ENCODE measurements at regions of chr2 and their contacts with region 1.

Region 1: GRCh38 chr2:113390124-113390849 is 47.2 kb upstream of the ZNG1B start:
- DNase-seq: peak; percentile 59
- H3K4me3 Mint-ChIP-seq: peak overlapping the region; percentile 7
- H3K27ac Mint-ChIP-seq: peak overlapping the region; percentile 38
- H3K4me1 Mint-ChIP-seq: peaks cover 11% of the 10 kb centered on the region
- H3K27me3 Mint-ChIP-seq: peaks cover 9% of the 10 kb centered on the region

Region 2: DNA sequence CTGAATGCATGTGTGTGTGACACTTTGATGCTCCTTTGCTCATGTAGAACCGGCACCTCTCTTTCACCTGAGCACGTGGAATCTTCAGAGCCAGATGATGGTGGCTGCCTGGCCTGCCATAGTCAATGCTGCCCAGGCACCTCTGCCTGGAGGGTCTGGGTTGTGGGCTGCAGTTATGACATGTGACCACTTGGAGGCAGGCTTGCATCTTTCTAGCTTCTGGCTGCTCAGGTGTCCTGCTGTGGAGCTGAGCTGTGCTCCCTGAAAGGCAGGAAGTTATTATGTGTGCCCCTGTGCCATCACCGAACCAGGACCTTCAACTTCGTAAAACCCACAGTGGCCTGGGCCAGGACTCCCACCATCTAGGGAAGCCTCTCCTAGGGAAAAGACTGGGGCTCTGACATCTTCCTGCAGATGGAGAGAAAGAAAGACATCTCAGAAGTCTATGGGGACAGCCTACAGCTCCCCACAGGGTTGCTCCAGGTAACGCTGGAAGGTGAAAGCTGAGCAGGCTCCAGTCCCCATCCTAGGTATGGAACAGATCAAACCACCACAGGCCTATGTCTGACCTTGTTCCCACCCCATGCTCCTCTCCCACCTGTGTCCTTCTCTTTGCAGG is 186.3 kb before region 1 on chr2:
- CTCF ChIA-PET with region 1: interaction called, 18 read pairs
- POLR2A ChIA-PET with region 1: no interaction called
- intact Hi-C with region 1: loop called (anchors 5 kb)
- DNase-seq: peak; percentile 85
- H3K4me3 Mint-ChIP-seq: no peak overlapping the region
- H3K27ac Mint-ChIP-seq: peak overlapping the region; percentile 79
- H3K4me1 Mint-ChIP-seq: peaks cover 10% of the 10 kb centered on the region
- H3K27me3 Mint-ChIP-seq: no peaks in the 10 kb centered on the region

Region 3: GRCh38 chr2:113225263-113226259 is 164.7 kb before region 1 on chr2:
- CTCF ChIA-PET with region 1: no interaction called
- POLR2A ChIA-PET with region 1: no interaction called
- intact Hi-C with region 1: no loop called
- DNase-seq: no peak
- H3K4me3 Mint-ChIP-seq: no peak overlapping the region
- H3K27ac Mint-ChIP-seq: no peak overlapping the region
- H3K4me1 Mint-ChIP-seq: peaks cover 4% of the 10 kb centered on the region
- H3K27me3 Mint-ChIP-seq: peaks cover 2% of the 10 kb centered on the region

Region 4: DNA sequence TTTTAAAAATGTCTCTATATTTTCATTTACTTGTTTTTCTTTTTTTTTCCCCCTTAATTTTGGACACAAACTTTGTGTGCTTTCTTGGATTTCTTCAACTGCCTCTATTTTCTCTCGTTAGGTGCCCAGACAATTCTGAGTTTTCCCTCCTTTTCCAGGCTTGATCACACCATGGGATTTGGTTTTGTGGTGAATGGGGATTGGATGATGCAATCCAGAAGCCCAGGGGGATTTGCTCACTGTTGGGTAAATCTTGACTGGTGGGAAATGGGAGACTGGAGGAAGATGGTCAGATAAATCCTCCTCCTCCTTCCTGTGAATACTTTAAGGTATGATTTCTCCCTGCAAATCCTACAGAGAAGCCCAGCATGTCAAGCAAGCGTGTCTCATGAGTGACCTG is 92.1 kb before region 1 on chr2:
- CTCF ChIA-PET with region 1: interaction called, 10 read pairs
- POLR2A ChIA-PET with region 1: no interaction called
- intact Hi-C with region 1: no loop called
- DNase-seq: no peak
- H3K4me3 Mint-ChIP-seq: no peak overlapping the region
- H3K27ac Mint-ChIP-seq: no peak overlapping the region
- H3K4me1 Mint-ChIP-seq: no peaks in the 10 kb centered on the region
- H3K27me3 Mint-ChIP-seq: no peaks in the 10 kb centered on the region

Region 5: GRCh38 chr2:113376913-113377445 is 13.3 kb before region 1 on chr2:
- CTCF ChIA-PET with region 1: interaction called, 12 read pairs
- POLR2A ChIA-PET with region 1: no interaction called
- intact Hi-C with region 1: no loop called
- DNase-seq: no peak
- H3K4me3 Mint-ChIP-seq: no peak overlapping the region
- H3K27ac Mint-ChIP-seq: peak overlapping the region; percentile 35
- H3K4me1 Mint-ChIP-seq: peaks cover 17% of the 10 kb centered on the region
- H3K27me3 Mint-ChIP-seq: peaks cover 11% of the 10 kb centered on the region

Region 6: GRCh38 chr2:113407446-113408099 is 17.3 kb after region 1 on chr2:
- CTCF ChIA-PET with region 1: no interaction called
- POLR2A ChIA-PET with region 1: no interaction called
- intact Hi-C with region 1: no loop called
- DNase-seq: no peak
- H3K4me3 Mint-ChIP-seq: no peak overlapping the region
- H3K27ac Mint-ChIP-seq: no peak overlapping the region
- H3K4me1 Mint-ChIP-seq: no peaks in the 10 kb centered on the region
- H3K27me3 Mint-ChIP-seq: peaks cover 30% of the 10 kb centered on the region

Region 7: DNA sequence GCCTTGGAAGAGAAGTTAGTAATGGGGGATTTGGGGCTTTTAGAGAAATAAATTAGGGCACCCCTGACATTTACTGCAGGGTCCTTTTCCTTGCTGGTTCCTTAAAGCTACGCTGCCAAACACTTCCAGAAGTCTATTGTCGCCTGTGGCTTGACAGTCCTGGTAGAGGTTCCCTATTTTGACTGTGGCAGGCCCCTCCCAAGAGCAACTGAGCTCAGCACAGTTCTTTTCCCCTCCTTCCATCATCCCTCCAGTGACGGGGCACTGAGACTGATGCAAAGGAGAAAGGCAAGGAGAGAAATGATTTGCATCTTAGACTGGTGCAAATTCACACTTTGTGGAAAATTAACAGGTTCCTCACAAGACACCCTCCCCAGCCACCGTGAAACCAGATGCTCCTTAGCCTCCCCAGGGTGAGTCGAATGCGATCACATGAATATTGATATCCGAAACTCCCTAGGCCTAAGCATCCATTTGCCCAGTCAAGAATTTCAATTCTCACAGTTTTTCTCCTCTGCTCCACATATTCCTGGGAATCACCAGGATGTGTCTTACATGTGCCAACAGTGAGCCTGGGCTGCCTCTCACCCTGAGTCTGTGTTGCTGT is 282.1 kb after region 1 on chr2:
- CTCF ChIA-PET with region 1: no interaction called
- POLR2A ChIA-PET with region 1: no interaction called
- intact Hi-C with region 1: no loop called
- DNase-seq: no peak
- H3K4me3 Mint-ChIP-seq: no peak overlapping the region
- H3K27ac Mint-ChIP-seq: no peak overlapping the region
- H3K4me1 Mint-ChIP-seq: no peaks in the 10 kb centered on the region
- H3K27me3 Mint-ChIP-seq: no peaks in the 10 kb centered on the region

Region 8: DNA sequence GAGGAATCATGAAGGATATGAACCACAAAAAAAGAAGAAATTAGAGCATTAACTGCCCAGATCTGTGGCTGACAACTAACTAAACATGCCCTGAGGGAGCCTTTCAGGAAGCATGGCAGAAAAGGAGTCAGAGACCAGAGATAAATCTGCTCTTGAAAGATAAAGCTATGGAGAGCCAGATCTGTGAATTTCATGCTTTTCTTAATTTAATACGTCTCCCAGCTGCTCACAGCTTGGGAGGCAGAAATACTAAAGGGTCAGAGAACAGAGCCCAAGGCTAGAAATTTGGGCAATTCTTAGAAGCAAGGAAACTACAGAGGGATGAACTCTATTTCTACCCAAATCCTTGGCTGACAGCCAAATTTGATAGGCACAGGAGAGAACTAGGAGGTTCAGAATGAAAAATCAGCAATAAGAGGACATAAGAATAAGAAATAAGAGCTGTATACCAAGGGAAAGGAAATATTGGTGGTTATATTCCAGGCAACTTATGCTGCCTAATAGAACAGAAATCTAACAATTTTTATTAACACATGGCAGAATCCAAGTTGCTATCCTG is 829.2 kb after region 1 on chr2:
- CTCF ChIA-PET with region 1: no interaction called
- POLR2A ChIA-PET with region 1: no interaction called
- intact Hi-C with region 1: no loop called
- DNase-seq: no peak
- H3K4me3 Mint-ChIP-seq: no peak overlapping the region
- H3K27ac Mint-ChIP-seq: no peak overlapping the region
- H3K4me1 Mint-ChIP-seq: no peaks in the 10 kb centered on the region
- H3K27me3 Mint-ChIP-seq: peaks cover 18% of the 10 kb centered on the region